ENCODE measurements at regions of chr15 and their contacts with region 1.

Region 1: DNA sequence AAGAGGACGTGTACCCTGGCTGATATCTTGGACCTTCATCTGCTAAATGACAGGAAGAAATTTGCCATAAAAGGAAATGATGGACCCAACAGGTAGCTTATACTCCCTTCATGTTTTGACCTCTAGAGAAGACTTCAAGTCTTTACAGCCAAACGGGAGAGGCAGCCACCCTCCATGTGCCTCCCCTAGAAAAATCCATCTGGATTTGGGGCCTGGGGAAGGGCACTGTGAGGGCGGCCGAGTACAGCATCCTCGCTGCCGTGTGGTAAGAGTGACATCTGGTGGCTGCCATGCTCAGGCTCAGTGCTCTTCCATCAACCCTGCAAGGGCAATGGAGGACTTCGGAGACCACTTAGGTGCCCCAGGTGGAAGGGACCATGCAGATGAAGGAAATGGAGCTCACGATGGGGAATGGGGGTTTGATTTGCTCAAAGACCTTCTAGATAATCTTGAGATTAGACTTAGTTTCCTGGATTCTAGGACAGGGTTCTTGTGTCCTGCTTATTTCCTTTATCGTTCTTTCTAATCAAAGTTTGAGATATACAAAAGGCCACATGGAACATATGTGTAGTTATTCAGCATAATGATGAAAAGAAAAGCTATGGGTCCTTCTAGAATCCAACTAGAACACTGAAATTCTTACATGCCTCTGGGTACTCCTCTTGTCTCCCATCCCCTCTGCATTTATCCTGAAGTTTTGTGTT is 44.4 kb downstream of the AQP9 start:
- DNase-seq: peak; percentile 36 to 73
- H3K4me3 ChIP-seq: no peak overlapping the region
- H3K27ac ChIP-seq: no peak overlapping the region
- H3K4me1 ChIP-seq: no peaks in the 10 kb centered on the region
- H3K27me3 ChIP-seq: peaks cover 0 to 2% (median 0%) of the 10 kb centered on the region in 4 experiments; a peak in 1 of 7 replicates
- CTCF ChIP-seq: peak; percentile 95 to 97 (median 96)
- EP300 ChIP-seq: no peak
- POLR2A ChIP-seq: no peak
- RAD21 ChIP-seq: peak; percentile 99 to 100

Region 2: DNA sequence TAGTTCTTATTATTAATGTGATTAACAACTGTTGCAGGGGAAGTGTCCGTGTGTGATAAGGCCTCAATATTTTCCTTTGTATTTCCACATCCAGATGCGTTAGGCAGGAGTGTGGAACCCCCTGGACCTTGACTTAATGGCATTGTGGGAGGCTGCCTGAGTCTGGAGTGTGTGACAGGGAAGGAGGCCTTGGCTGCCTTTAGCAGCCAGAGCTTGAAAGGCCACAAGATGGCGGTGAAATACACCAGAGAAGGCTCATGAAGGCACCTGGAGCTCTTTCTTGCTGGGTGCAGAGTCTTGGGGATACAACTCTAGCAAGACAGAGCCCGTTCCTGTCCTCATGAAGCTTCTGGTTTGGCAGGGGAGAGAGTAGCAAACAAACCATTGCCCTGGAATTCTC is 439.2 kb before region 1 on chr15:
- CTCF ChIA-PET with region 1: interaction called, 16 read pairs
- POLR2A ChIA-PET with region 1: no interaction called
- DNase-seq: no peak
- H3K4me3 ChIP-seq: no peak overlapping the region
- H3K27ac ChIP-seq: no peak overlapping the region
- H3K4me1 ChIP-seq: peaks cover 0 to 7% (median 6%) of the 10 kb centered on the region in 4 experiments; a peak in 6 of 7 replicates
- H3K27me3 ChIP-seq: no peaks in the 10 kb centered on the region
- CTCF ChIP-seq: peak; percentile 47 to 65 (median 59)
- EP300 ChIP-seq: no peak
- POLR2A ChIP-seq: no peak
- RAD21 ChIP-seq: peak; percentile 66 to 78

Region 3: DNA sequence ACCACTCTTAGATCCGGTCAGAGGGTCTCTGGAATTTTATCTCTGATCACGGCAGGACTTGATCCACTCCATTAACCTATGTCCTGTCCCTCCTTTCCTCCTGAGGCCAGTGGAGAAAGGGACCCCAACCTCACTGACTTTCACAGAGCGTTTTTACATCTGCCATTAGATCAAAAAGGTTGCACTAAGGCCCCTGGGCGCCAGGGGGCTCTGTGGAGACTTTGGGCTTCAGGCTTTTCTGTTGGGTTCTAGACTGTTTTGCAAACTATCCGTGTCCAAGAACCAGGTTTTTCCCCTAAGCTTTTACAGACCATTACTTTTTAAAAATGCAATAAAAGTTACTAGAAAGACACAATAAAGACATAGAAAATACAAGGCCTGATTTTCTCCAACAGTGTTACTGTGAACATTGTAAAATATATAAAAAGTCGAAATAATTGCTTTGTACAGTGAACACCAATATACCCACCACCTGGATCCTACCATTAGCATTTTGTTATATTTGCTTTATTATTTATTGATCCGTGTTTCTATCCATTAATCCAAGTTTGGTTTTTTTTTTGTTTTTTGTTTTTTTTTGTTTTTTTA is 316.4 kb before region 1 on chr15:
- CTCF ChIA-PET with region 1: interaction called, 14 read pairs
- POLR2A ChIA-PET with region 1: no interaction called
- DNase-seq: peak; percentile 38 to 87
- H3K4me3 ChIP-seq: no peak overlapping the region
- H3K27ac ChIP-seq: no peak overlapping the region
- H3K4me1 ChIP-seq: no peaks in the 10 kb centered on the region
- H3K27me3 ChIP-seq: no peaks in the 10 kb centered on the region
- CTCF ChIP-seq: peak; percentile 61 to 90 (median 78)
- EP300 ChIP-seq: no peak
- POLR2A ChIP-seq: no peak
- RAD21 ChIP-seq: peak; percentile 64 to 78

Region 4: DNA sequence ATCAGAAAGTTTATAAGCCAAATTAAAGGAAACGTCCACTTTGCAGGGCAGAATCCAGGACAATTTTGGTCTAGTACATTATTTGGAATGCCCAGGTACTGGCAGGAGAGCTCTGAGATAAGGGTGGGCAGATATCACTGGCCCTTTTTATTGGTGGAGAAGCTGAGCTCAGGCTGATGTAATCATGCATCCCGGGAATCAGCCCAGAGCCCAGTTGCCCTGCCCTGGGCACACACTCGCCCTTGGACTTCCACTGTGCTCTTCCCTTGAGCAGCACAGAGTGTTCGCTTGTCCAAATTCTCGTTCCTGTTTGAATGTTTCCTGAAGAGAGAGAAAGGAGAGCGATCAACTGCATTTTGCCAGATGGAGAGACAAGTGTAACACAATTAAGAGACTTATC is 40.7 kb before region 1 on chr15:
- CTCF ChIA-PET with region 1: interaction called, 10 read pairs
- POLR2A ChIA-PET with region 1: no interaction called
- DNase-seq: no peak
- H3K4me3 ChIP-seq: no peak overlapping the region
- H3K27ac ChIP-seq: no peak overlapping the region
- H3K4me1 ChIP-seq: peaks cover 0 to 2% (median 0%) of the 10 kb centered on the region in 4 experiments; a peak in 3 of 7 replicates
- H3K27me3 ChIP-seq: no peaks in the 10 kb centered on the region
- CTCF ChIP-seq: no peak
- EP300 ChIP-seq: no peak
- POLR2A ChIP-seq: no peak
- RAD21 ChIP-seq: no peak

Region 5: GRCh38 chr15:58171476-58172057 is 11.0 kb before region 1 on chr15:
- CTCF ChIA-PET with region 1: interaction called, 20 read pairs
- POLR2A ChIA-PET with region 1: interaction called, 4 read pairs
- DNase-seq: no peak
- H3K4me3 ChIP-seq: no peak overlapping the region
- H3K27ac ChIP-seq: no peak overlapping the region
- H3K4me1 ChIP-seq: no peaks in the 10 kb centered on the region
- H3K27me3 ChIP-seq: no peaks in the 10 kb centered on the region; a peak in 1 of 7 replicates
- CTCF ChIP-seq: no peak
- EP300 ChIP-seq: no peak
- POLR2A ChIP-seq: no peak
- RAD21 ChIP-seq: no peak